Mammary epithelial cell (primary cell): ENCODE measurements at regions of chr6 and their contacts with region 1.

Region 1: GRCh38 chr6:52664186-52664990 is 6.5 kb upstream of the TMEM14A start:
- DNase-seq: peak; percentile 88
- H3K4me3 ChIP-seq: peak overlapping the region; percentile 66 to 71 (median 70)
- H3K27ac ChIP-seq: peak overlapping the region; percentile 24
- H3K4me1 ChIP-seq: peaks cover 16% of the 10 kb centered on the region
- H3K27me3 ChIP-seq: no peaks in the 10 kb centered on the region
- CTCF ChIP-seq: no peak

Region 2: DNA sequence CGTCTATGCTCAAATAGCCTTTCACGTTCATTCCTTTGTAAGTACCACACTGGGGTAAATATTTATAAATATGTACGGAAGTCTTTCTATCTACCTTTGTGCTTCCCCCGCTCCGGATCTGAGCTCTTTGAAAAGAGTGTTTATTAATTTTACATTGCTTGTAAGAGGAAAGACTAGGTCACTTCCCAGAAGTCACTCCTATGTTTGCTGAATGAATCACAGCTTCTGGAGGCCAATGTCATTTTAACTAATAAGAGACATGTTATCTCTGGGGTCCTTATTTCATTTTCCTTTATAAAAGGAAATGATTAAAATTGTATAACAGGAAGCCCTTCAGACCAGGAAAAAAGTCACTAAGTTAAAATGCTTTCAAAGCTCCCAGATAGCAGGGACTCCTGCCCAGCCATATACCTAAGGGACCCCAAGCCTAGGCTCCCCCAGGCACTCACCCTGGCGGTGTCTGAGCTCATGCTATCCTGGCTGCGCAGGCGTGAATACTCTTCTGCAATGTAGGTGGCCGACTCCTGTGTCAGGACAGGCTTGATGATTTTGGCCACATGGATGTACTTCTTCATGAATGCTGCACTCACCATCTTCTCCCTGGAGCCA is 392.4 kb before region 1 on chr6:
- CTCF ChIA-PET with region 1: no interaction called
- dilution Hi-C with region 1: no loop called
- in situ Hi-C with region 1: loop called in 1 of 2 experiments (anchors 10 kb)
- intact Hi-C with region 1: no loop called
- DNase-seq: no peak
- H3K4me3 ChIP-seq: no peak overlapping the region
- H3K27ac ChIP-seq: no peak overlapping the region
- H3K4me1 ChIP-seq: no peaks in the 10 kb centered on the region
- H3K27me3 ChIP-seq: no peaks in the 10 kb centered on the region
- CTCF ChIP-seq: no peak

Region 3: DNA sequence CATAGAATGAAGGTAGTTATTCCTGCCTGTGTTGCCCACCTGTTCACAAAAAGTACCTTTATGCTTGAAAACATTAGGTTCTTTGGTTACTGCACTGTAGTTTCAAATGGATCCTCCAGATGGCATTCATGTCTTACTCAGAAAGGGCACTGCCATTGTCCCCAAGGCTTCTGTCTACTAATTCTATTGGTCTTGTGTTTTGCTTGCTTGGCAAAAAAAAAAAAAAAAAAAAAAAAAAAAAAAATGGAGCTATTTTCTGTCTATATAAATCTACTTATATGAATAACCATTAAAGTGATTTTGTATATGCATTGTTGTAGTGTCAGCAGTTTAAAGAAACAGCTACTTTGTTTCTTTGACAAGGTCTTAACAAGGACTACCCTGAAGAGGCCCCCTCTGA is 256.9 kb before region 1 on chr6:
- CTCF ChIA-PET with region 1: no interaction called
- dilution Hi-C with region 1: loop called (anchors 25 kb)
- in situ Hi-C with region 1: loop called in 1 of 2 experiments (anchors 5 kb)
- intact Hi-C with region 1: loop called (anchors 1 kb)
- DNase-seq: peak; percentile 37
- H3K4me3 ChIP-seq: no peak overlapping the region
- H3K27ac ChIP-seq: no peak overlapping the region
- H3K4me1 ChIP-seq: no peaks in the 10 kb centered on the region
- H3K27me3 ChIP-seq: no peaks in the 10 kb centered on the region
- CTCF ChIP-seq: peak; percentile 58 to 61

Region 4: DNA sequence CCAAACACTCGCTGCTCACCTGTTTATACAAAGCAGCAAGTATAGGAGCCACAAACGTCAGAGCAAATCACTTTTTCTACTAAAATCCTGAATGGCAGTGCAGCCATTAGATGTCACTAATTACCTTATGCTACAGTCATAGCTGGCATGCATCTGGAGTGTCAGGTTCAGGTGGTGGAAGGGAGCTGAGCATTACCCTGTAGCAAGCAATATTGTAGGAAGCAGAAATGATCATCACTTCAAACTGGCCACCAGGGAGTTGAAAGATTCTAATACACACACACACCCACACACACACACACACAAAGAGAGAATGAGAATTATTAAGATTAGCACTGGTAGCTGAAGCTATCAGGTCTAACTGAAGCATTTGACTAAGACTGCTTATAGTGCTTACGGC is 168.5 kb before region 1 on chr6:
- CTCF ChIA-PET with region 1: no interaction called
- dilution Hi-C with region 1: no loop called
- in situ Hi-C with region 1: no loop called
- intact Hi-C with region 1: loop called (anchors 1 kb)
- DNase-seq: no peak
- H3K4me3 ChIP-seq: no peak overlapping the region
- H3K27ac ChIP-seq: no peak overlapping the region
- H3K4me1 ChIP-seq: peaks cover 13% of the 10 kb centered on the region
- H3K27me3 ChIP-seq: no peaks in the 10 kb centered on the region
- CTCF ChIP-seq: no peak

Region 5: DNA sequence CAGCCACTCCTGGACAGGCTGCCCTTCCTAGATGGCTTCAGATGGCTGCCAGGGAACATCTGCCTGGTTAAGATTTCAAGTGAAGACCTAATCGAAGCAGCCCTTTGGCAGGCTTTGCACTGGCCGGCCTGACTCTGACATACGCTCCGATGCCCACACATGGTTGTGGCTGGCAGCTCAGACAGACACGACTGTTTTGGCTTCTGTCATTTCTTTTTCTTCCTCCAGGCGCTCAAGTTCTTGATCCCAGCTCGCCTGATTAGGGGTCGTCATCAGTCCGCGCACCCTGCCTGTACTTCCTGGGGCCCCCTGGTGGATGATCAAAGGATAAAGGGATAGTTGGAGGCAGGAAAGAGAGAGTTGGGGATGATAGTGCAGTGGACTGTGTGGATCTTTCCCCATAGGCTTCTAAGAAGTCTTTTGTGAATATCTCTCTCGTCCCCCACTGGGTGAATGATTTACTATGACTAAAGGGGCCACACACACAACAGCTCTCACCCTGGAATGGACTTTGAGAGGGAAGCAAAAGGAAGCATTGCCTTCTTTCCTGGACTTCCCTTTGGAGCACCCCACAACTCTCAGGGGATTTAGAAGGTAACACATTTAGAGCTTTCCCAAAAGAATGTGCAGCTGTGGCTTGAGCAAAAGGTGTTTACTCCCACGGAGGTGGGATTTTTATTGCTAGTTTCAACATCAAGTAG is 66.1 kb before region 1 on chr6:
- CTCF ChIA-PET with region 1: no interaction called
- dilution Hi-C with region 1: no loop called
- in situ Hi-C with region 1: no loop called
- intact Hi-C with region 1: loop called (anchors 2 kb)
- DNase-seq: no peak
- H3K4me3 ChIP-seq: no peak overlapping the region
- H3K27ac ChIP-seq: no peak overlapping the region
- H3K4me1 ChIP-seq: peaks cover 12% of the 10 kb centered on the region
- H3K27me3 ChIP-seq: no peaks in the 10 kb centered on the region
- CTCF ChIP-seq: peak; percentile 60 to 71

Region 6: GRCh38 chr6:52995913-52996645 is 331.7 kb after region 1 on chr6:
- CTCF ChIA-PET with region 1: no interaction called
- dilution Hi-C with region 1: no loop called
- in situ Hi-C with region 1: no loop called
- intact Hi-C with region 1: loop called (anchors 5 kb)
- DNase-seq: peak; percentile 81
- H3K4me3 ChIP-seq: peak overlapping the region in 1 of 3 experiments; percentile 14
- H3K27ac ChIP-seq: no peak overlapping the region
- H3K4me1 ChIP-seq: peaks cover 17% of the 10 kb centered on the region
- H3K27me3 ChIP-seq: no peaks in the 10 kb centered on the region
- CTCF ChIP-seq: no peak